Ovary (tissue), 10 donors: ENCODE measurements at regions of chr17 and their contacts with region 1.

Region 1: GRCh38 chr17:50841949-50842354 is 6.6 kb downstream of the WFIKKN2 start:
- DNase-seq: peak; percentile 68 to 89 (median 84)
- H3K4me3 ChIP-seq: no peak overlapping the region
- H3K27ac ChIP-seq: peak overlapping the region; percentile 5 to 45
- H3K4me1 ChIP-seq: no peaks in the 10 kb centered on the region
- H3K27me3 ChIP-seq: no peaks in the 10 kb centered on the region
- CTCF ChIP-seq: peak; percentile 60 to 85 (median 80)
- EP300 ChIP-seq: no peak
- POLR2A ChIP-seq: no peak

Region 2: DNA sequence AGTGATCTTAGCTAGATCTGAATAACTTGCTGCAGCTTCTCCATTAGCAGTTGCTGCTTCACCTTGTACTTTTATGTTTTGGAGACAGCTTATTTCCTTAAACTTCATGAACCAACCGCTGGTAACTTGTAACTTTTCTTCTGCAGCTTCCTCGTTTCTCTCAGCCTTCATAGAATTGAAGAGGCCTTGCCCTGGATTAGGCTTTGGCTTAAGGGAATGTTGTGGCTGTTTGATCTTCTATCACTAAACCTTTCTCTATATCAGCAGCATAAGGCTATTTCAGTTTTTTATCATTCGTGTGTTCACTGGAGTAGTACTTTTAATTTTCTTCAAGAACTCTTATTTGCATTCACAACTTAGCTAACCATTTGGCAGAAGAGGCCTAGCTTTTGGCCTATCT is 589.2 kb before region 1 on chr17:
- intact Hi-C with region 1: no loop called
- DNase-seq: no peak
- H3K4me3 ChIP-seq: no peak overlapping the region
- H3K27ac ChIP-seq: no peak overlapping the region
- H3K4me1 ChIP-seq: no peaks in the 10 kb centered on the region
- H3K27me3 ChIP-seq: no peaks in the 10 kb centered on the region
- CTCF ChIP-seq: no peak
- EP300 ChIP-seq: no peak
- POLR2A ChIP-seq: no peak

Region 3: GRCh38 chr17:50731575-50732460 is 110.1 kb before region 1 on chr17:
- intact Hi-C with region 1: no loop called
- DNase-seq: no peak
- H3K4me3 ChIP-seq: no peak overlapping the region
- H3K27ac ChIP-seq: no peak overlapping the region
- H3K4me1 ChIP-seq: peaks cover 17% of the 10 kb centered on the region
- H3K27me3 ChIP-seq: no peaks in the 10 kb centered on the region
- CTCF ChIP-seq: no peak
- EP300 ChIP-seq: no peak
- POLR2A ChIP-seq: no peak

Region 4: DNA sequence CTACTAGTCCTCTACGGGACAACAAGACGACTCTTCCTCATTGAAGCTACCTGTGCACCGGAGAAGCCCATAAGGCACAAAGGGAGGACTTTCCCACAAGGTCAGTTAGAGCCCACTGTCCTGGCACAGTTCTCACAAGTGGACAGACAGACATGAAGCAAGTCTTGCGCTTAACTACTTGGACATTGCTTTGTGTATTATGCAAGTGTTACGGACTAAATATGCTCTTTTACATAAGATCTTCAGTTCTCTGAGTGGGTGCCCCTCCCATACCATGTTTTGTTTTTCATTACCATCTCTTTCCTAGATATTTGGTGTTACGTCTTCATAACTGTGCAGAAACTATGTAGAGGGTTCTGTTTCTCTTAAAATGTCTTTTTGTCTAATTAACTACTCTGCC is 92.7 kb before region 1 on chr17:
- intact Hi-C with region 1: no loop called
- DNase-seq: no peak
- H3K4me3 ChIP-seq: no peak overlapping the region
- H3K27ac ChIP-seq: no peak overlapping the region
- H3K4me1 ChIP-seq: no peaks in the 10 kb centered on the region
- H3K27me3 ChIP-seq: no peaks in the 10 kb centered on the region
- CTCF ChIP-seq: no peak
- EP300 ChIP-seq: no peak
- POLR2A ChIP-seq: no peak

Region 5: DNA sequence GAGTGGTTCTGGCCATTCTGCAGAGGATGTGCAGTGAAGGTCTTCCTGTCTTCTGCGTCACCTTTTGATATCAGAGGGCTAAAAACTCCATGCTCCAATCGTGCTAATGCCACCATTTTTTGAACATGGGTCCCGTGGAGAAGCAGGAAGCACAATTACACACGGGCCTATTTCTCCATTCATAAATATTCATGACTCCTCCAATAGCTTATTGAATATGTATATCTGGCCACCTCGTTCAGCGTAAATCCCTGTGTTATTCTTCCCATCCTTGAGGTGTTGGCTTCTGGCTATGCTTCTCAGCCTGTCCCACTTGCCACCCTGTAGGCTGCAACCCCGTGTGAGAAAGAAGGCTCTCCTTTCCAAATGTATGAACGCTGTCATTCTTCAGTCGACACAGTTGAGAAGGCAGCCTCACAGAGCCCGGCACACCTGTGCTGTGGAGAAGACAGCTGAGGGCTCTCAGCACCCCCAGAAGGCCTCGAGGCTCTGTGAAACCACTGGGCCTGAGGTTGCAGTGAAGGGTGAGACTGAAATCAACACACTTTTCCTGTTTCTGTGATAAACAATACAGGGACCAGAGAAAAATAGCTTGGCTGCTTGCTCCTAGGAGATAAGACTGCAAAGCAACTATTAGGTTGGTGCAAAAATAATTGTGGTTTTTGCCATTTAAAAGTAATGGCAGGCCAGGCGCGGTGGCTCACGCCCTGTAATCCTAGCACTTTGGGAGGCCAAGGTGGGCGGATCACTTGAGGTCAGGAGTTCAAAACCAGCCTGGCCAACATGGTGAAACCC is 69.8 kb before region 1 on chr17:
- intact Hi-C with region 1: no loop called
- DNase-seq: peak in 1 of 5 donors; percentile 1
- H3K4me3 ChIP-seq: no peak overlapping the region
- H3K27ac ChIP-seq: no peak overlapping the region
- H3K4me1 ChIP-seq: no peaks in the 10 kb centered on the region
- H3K27me3 ChIP-seq: no peaks in the 10 kb centered on the region
- CTCF ChIP-seq: no peak
- EP300 ChIP-seq: no peak
- POLR2A ChIP-seq: no peak

Region 6: DNA sequence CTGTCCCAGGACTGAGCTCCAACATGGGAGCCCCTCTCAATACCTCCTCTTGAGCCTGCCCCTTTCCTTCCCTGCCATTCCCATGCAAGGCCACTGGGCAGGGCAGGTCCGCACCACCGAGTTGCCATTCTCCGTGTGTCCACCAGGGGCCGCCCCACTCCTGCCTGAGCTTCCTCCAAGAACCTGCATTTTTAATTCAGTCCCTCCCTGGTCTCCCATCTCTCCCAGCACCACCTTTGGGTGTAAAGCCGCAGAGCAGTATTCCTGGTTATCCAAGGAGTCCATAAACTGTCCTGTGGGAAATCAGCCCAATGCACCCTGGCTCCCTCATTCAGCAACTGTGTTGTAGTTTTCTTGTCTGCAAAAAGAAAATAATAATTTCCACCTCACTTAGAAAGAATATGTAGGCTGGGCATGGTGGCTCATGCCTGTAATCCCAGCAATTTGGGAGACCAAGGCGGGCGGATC is 58.7 kb before region 1 on chr17:
- intact Hi-C with region 1: loop called (anchors 2 to 5 kb)
- DNase-seq: peak; percentile 79 to 94 (median 89)
- H3K4me3 ChIP-seq: no peak overlapping the region
- H3K27ac ChIP-seq: no peak overlapping the region
- H3K4me1 ChIP-seq: peaks cover 8% of the 10 kb centered on the region
- H3K27me3 ChIP-seq: no peaks in the 10 kb centered on the region
- CTCF ChIP-seq: peak; percentile 93 to 99 (median 98)
- EP300 ChIP-seq: no peak
- POLR2A ChIP-seq: no peak

Region 7: DNA sequence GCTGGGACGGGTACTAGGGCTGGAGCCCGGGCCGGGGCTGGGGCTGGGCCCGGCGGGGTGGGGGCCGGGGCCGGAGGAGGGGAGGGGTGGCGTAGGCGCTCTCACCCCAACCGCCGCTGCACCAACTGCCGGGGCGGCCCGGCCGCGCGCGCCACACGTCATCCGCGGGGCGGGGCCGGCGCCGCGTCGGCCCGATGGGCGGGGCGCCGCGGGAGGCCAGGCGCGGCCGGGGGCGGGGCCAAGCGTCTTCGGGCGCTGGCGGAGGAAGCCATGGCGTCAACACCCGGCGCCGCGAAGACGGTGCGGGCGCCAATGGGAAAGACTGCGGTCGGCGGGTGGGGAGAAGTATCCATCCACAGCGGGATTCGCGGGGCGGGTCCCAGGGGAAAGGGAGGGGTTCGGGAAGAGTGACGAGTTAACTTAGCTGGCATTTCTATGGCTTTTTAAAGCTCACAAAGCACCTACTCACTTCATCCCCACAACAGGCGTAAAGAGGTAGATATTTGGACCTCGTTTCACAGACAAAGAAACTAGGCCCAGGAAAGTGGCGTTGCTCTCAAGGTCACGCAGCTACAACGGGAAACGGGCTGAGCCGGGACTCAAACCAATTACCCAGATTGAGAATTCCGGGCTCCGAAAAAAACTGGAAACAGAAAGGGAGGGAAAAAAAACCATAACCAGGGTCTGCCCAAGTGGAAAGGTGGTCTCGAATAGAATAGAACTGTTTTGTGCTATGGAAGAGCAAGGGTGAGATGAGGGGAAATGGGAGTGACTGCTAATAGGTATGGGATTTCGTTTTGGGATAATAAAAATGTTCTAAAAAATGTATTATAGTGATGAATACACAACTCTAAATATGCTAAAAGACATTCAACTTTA is 279.0 kb after region 1 on chr17 and contains the start of gene SPAG9:
- intact Hi-C with region 1: loop called in 1 of 4 experiments (anchors 10 kb)
- DNase-seq: peak; percentile 94 to 97 (median 96)
- H3K4me3 ChIP-seq: peak within 1 kb of the TSS; percentile 89
- H3K27ac ChIP-seq: peak within 1 kb of the TSS; percentile 99
- H3K4me1 ChIP-seq: peaks cover 13% of the 10 kb centered on the region
- H3K27me3 ChIP-seq: no peaks in the 10 kb centered on the region
- CTCF ChIP-seq: no peak
- EP300 ChIP-seq: peak; percentile 44
- POLR2A ChIP-seq: peak; percentile 87
- total RNA-seq, gene SPAG9: 63.4 to 103 (median 89.5) TPM